ENCODE measurements at regions of chr7 and their contacts with region 1.

Region 1: DNA sequence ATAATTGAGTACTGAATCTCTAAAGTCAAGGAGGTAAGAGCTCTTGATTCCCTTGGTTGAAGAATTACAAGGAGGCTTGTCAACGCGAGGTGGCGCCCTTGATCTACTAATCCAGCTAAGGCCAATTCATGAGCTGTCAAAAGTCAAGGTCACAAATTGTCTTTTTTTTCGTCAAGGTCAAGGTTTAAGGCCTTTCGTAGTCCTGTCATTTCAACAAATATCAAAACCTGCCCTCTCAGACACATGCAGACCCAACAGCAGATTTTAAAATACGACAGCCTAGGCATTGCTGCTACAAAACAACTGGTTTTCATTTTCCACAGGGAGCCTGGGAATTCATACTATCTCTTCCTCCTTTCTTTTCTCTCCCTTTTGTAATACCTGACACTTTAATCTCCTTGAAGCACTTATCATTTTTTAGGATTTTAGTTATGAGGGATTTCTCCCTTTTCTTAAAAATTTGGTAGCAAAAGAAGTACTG is 3.6 kb downstream of the HOXA13 start:
- DNase-seq: peak; percentile 88 to 89
- H3K4me3 ChIP-seq: no peak overlapping the region
- H3K27ac ChIP-seq: no peak overlapping the region
- H3K4me1 ChIP-seq: peaks cover 0 to 44% (median 20%) of the 10 kb centered on the region in 4 donors
- H3K27me3 ChIP-seq: peaks cover 4 to 96% of the 10 kb centered on the region in 2 donors
- CTCF ChIP-seq: peak; percentile 67 to 69

Region 2: DNA sequence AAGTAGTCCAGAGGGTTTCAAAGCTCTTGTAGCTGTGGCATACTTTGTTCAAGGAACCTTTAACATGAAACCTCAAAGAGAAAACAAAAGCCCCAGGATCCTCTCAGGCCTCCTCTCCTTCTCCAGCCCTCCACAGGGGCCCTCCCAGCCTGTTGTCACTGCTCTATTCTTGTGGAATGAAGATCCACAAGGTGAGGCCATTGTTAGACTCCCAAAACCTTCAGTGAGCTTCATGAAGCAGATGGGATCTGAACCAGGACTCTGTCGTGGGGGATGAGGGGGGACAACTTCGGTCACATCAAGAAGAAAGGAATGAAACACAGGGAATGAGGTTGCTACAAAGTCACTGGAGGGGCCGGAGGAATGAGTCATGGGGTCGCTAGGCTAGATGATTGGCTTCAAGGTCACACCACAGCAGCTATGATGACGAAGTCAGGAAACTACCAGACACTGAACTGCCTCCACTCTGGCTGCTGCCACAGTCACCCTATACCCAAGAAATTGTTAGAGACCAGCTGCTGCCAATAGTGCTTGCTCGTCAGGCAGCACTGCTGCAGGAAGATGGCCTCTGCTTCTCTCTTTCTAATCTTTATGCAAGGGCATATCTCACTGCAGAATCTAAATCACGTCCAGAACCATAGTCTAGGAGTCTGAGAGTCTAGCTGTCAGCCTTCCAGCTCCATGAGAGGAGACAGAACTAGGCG is 257.5 kb after region 1 on chr7:
- intact Hi-C with region 1: no loop called
- DNase-seq: no peak
- H3K4me3 ChIP-seq: no peak overlapping the region
- H3K27ac ChIP-seq: no peak overlapping the region
- H3K4me1 ChIP-seq: no peaks in the 10 kb centered on the region
- H3K27me3 ChIP-seq: peaks cover 0 to 3% of the 10 kb centered on the region in 2 donors
- CTCF ChIP-seq: no peak

Region 3: GRCh38 chr7:27576360-27576944 is 380.1 kb after region 1 on chr7:
- intact Hi-C with region 1: loop called (anchors 10 kb)
- DNase-seq: no peak
- H3K4me3 ChIP-seq: no peak overlapping the region
- H3K27ac ChIP-seq: no peak overlapping the region
- H3K4me1 ChIP-seq: no peaks in the 10 kb centered on the region
- H3K27me3 ChIP-seq: no peaks in the 10 kb centered on the region
- CTCF ChIP-seq: peak; percentile 54 to 56

Region 4: GRCh38 chr7:27921081-27921836 is 724.9 kb after region 1 on chr7:
- intact Hi-C with region 1: loop called (anchors 10 kb)
- DNase-seq: no peak
- H3K4me3 ChIP-seq: no peak overlapping the region
- H3K27ac ChIP-seq: no peak overlapping the region
- H3K4me1 ChIP-seq: peaks cover 0 to 2% (median 0%) of the 10 kb centered on the region in 4 donors
- H3K27me3 ChIP-seq: no peaks in the 10 kb centered on the region
- CTCF ChIP-seq: peak; percentile 42 to 45

Region 5: GRCh38 chr7:28096713-28097112 is 900.4 kb after region 1 on chr7:
- intact Hi-C with region 1: loop called (anchors 10 kb)
- DNase-seq: peak in 1 of 2 donors; percentile 50
- H3K4me3 ChIP-seq: no peak overlapping the region
- H3K27ac ChIP-seq: no peak overlapping the region
- H3K4me1 ChIP-seq: peaks cover 0 to 15% (median 7%) of the 10 kb centered on the region in 4 donors
- H3K27me3 ChIP-seq: no peaks in the 10 kb centered on the region
- CTCF ChIP-seq: peak; percentile 79 to 86

Measured in tibial artery (tissue), 4 donors.